Panc1 (cell line): ENCODE measurements at regions of chr2 and their contacts with region 1.

Region 1: DNA sequence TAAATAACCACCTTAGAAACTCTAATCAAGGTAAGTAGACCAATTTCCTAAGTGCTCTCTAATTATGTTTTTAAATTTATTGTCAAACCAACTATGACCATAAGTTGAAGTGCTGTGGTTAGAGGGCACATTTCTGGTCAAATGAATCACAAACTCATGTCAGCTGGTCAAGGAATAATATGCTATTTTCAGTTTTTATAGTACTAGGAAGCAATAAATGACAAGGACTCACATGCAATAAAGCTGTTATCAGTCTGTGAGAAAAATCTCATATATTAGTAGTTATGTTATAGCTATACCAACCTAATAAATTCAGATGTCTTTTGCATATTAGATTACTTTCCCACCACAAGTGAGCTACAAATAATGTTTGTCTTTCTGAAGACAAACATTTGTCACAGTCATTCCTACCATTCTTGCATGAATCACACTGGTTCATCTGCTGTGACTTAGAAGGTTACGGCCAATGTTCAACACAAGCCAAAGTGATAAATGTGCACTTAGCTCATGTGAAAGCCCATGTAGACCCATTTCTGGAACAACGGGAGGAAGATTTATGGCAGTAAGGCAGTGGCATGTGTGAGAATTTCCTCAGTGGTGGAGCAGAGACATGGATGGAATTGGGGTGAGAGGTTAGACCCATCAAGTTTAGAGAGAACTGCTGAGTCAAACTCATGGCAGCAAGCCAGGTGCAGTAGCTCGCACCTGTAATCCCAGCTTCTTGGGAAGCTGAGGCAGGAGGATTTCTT is 27.4 kb upstream of the CCNYL1 start:
- DNase-seq: peak; percentile 95
- ATAC-seq: peak; percentile 94
- H3K4me3 ChIP-seq: no peak overlapping the region
- H3K27ac ChIP-seq: peak overlapping the region; percentile 49
- H3K4me1 ChIP-seq: peaks cover 6% of the 10 kb centered on the region
- H3K27me3 ChIP-seq: no peaks in the 10 kb centered on the region
- CTCF ChIP-seq: no peak

Region 2: DNA sequence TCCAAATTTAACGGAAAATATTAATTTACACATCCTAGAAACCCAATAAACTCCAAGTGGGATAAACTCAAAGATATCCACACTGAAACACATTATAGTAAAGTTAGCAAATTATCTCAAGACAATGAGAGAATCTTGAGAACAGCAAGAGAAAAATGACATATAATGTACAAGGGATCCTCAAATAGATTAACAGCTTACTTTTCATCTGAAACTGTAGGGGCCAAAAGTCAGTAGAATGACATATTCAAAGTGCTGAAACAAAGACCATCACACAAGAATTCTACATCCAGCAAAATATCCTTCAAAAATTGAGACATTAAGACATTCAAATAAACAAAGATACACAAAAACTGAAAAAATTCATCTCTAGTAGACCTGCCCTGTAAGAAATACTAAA is 40.2 kb before region 1 on chr2:
- CTCF ChIA-PET with region 1: no interaction called
- POLR2A ChIA-PET with region 1: interaction called, 10 read pairs
- in situ Hi-C with region 1: no loop called
- intact Hi-C with region 1: no loop called
- DNase-seq: no peak
- ATAC-seq: no peak
- H3K4me3 ChIP-seq: no peak overlapping the region
- H3K27ac ChIP-seq: no peak overlapping the region
- H3K4me1 ChIP-seq: no peaks in the 10 kb centered on the region
- H3K27me3 ChIP-seq: no peaks in the 10 kb centered on the region
- CTCF ChIP-seq: no peak